Activated CD4-positive, alpha-beta memory T cell treated with anti-CD3 and anti-CD28 coated beads for 36 hours (primary cell): ENCODE measurements at regions of chrX and their contacts with region 1.

Region 1: GRCh38 chrX:17736856-17737706 is at the start of gene SCML1:
- DNase-seq: peak; percentile 94
- H3K4me3 Mint-ChIP-seq: peak within 1 kb of the TSS; percentile 75
- H3K27ac Mint-ChIP-seq: peak within 1 kb of the TSS; percentile 73
- H3K4me1 Mint-ChIP-seq: peaks cover 19% of the 10 kb centered on the region
- H3K27me3 Mint-ChIP-seq: peaks cover 4% of the 10 kb centered on the region
- total RNA-seq, gene SCML1: 3.8 TPM

Region 2: DNA sequence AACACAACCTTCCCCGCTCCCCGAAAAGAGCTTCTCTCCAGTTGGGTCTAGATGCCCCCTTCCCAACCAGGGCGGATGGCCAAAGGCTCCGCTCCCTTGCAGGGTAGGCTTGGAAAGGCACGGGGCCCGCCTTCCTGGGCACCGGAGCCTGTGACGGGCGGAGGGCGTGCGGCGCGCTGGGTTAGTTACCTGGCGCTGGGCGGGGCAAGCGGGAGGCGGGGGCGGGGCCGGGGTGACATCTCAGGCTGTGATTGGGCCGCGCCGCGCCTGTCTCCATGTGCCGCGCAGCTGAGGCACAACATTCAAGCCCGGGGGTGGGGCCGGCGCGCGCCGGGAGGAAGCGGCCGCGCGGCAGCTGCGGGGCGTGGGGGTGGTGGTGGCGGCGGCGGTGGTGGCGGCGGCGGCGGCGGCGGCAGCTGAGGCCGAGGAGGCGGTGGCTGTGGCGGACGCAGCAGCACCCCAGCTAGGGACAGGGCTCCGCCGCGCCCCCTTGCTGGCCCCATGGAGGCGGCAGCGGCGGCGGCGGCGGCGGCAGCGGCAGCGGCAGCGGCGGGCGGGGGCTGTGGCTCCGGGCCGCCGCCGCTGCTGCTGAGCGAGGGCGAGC is 790.6 kb before region 1 on chrX and contains the start of gene REPS2:
- CTCF ChIA-PET with region 1: no interaction called
- POLR2A ChIA-PET with region 1: no interaction called
- intact Hi-C with region 1: loop called (anchors 5 kb)
- DNase-seq: peak; percentile 85
- H3K4me3 Mint-ChIP-seq: peak within 1 kb of the TSS; percentile 69
- H3K27ac Mint-ChIP-seq: no peak within 1 kb of the TSS
- H3K4me1 Mint-ChIP-seq: no peaks in the 10 kb centered on the region
- H3K27me3 Mint-ChIP-seq: no peaks in the 10 kb centered on the region
- total RNA-seq, gene REPS2: not detected

Region 3: GRCh38 chrX:17374619-17375366 is 362.3 kb before region 1 on chrX and contains the start of gene NHS:
- CTCF ChIA-PET with region 1: no interaction called
- POLR2A ChIA-PET with region 1: no interaction called
- intact Hi-C with region 1: loop called (anchors 2 kb)
- DNase-seq: peak; percentile 31
- H3K4me3 Mint-ChIP-seq: no peak within 1 kb of the TSS
- H3K27ac Mint-ChIP-seq: no peak within 1 kb of the TSS
- H3K4me1 Mint-ChIP-seq: peaks cover 9% of the 10 kb centered on the region
- H3K27me3 Mint-ChIP-seq: peaks cover 22% of the 10 kb centered on the region
- total RNA-seq, gene NHS: 4.8 to 5.0 TPM

Region 4: DNA sequence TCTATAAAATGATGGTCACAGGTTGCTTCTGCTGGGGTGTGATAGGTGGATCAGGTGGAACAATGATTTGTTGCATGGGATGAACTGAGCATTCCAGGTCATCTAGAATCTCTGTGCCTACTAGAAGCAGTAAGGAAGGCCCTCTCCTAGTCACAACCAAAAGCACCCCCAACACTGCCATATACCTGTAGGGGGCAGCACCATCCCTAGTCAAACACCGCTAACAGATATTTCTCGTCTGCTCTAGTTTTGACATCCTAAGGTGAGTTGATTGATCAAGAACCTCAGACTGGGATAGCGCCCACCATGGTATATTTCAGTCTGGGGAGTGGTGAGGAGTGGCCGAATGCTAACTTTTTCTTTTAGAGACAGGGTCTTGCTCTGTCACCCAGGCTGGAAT is 201.9 kb before region 1 on chrX:
- CTCF ChIA-PET with region 1: no interaction called
- POLR2A ChIA-PET with region 1: no interaction called
- intact Hi-C with region 1: loop called (anchors 2 kb)
- DNase-seq: peak; percentile 69
- H3K4me3 Mint-ChIP-seq: no peak overlapping the region
- H3K27ac Mint-ChIP-seq: no peak overlapping the region
- H3K4me1 Mint-ChIP-seq: peaks cover 17% of the 10 kb centered on the region
- H3K27me3 Mint-ChIP-seq: no peaks in the 10 kb centered on the region

Region 5: DNA sequence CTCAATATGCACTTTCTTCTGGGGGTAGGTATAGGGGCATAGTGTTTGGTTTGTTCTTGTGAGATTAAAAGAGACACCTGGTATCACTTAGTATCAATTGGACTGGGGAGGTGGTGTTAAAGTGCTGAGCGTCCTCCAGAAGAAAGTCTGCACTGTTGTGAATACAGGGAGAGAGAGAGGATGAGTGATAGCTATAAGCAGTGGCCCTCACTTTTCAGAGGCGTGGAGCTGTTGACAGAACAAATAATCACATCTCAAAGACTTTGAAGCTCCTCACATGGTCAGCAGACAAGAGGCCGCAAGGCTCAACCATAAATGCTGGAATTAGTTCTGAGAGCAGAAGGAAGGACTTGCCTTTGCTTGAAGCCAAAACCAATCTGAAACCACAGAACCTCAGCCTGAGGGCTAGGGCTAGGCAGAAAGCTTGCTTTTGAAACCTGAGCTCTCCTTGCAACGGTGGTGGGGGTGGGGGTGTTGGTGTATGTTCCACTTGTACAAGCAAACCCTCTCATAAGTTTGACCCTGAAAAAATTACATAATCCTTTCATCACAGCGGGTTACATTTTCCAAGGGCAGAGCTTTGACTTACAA is 123.0 kb before region 1 on chrX:
- CTCF ChIA-PET with region 1: no interaction called
- POLR2A ChIA-PET with region 1: no interaction called
- intact Hi-C with region 1: no loop called
- DNase-seq: peak; percentile 9
- H3K4me3 Mint-ChIP-seq: no peak overlapping the region
- H3K27ac Mint-ChIP-seq: no peak overlapping the region
- H3K4me1 Mint-ChIP-seq: peaks cover 19% of the 10 kb centered on the region
- H3K27me3 Mint-ChIP-seq: peaks cover 5% of the 10 kb centered on the region

Region 6: DNA sequence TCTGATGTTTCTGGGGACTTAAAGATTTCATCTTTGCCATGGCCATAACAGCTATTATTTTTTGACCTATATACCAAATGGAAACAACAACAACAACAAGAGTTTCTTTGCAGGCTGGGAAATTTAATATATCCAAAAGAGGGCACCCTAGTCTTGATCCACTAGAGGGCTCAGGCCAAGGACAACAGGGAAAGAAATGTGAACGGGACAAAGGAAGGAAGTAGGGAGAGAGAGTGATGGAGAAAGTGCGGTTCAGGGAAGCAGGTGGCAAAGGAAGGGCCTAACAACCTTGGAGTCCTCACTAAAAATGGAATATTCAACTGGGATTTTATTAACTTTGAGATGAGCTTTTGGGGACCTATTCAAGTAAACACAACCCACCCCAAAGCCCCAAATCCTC is 67.6 kb before region 1 on chrX:
- CTCF ChIA-PET with region 1: no interaction called
- POLR2A ChIA-PET with region 1: no interaction called
- intact Hi-C with region 1: loop called (anchors 5 kb)
- DNase-seq: no peak
- H3K4me3 Mint-ChIP-seq: no peak overlapping the region
- H3K27ac Mint-ChIP-seq: peak overlapping the region; percentile 80
- H3K4me1 Mint-ChIP-seq: peaks cover 16% of the 10 kb centered on the region
- H3K27me3 Mint-ChIP-seq: no peaks in the 10 kb centered on the region

Region 7: DNA sequence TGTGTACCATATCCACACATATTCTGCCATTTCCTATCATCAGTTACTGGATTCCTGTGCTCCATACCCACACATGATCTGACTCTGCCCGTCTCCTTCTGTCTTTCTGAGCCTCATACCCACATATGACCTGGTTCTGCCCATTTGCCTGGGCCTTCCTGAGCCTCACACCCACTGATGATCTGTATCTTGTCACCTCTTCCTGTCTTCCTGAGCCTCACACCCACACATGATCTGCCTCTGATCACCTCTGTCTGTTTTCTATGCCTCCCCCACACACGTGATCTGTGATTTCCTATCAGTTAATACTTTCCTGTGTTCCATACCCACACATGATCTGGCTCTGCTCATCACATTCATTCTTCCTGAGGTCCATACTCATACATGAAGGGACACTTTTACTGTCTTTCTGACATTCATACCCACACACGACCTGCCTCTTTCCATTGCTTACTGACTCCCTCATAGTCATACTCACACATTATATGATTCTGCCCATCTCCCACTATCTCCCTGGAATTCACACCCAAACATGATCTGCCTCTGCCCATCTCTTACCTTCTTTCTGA is 32.7 kb after region 1 on chrX:
- CTCF ChIA-PET with region 1: no interaction called
- POLR2A ChIA-PET with region 1: no interaction called
- intact Hi-C with region 1: loop called (anchors 2 kb)
- DNase-seq: peak; percentile 25
- H3K4me3 Mint-ChIP-seq: no peak overlapping the region
- H3K27ac Mint-ChIP-seq: no peak overlapping the region
- H3K4me1 Mint-ChIP-seq: no peaks in the 10 kb centered on the region
- H3K27me3 Mint-ChIP-seq: no peaks in the 10 kb centered on the region

Region 8: DNA sequence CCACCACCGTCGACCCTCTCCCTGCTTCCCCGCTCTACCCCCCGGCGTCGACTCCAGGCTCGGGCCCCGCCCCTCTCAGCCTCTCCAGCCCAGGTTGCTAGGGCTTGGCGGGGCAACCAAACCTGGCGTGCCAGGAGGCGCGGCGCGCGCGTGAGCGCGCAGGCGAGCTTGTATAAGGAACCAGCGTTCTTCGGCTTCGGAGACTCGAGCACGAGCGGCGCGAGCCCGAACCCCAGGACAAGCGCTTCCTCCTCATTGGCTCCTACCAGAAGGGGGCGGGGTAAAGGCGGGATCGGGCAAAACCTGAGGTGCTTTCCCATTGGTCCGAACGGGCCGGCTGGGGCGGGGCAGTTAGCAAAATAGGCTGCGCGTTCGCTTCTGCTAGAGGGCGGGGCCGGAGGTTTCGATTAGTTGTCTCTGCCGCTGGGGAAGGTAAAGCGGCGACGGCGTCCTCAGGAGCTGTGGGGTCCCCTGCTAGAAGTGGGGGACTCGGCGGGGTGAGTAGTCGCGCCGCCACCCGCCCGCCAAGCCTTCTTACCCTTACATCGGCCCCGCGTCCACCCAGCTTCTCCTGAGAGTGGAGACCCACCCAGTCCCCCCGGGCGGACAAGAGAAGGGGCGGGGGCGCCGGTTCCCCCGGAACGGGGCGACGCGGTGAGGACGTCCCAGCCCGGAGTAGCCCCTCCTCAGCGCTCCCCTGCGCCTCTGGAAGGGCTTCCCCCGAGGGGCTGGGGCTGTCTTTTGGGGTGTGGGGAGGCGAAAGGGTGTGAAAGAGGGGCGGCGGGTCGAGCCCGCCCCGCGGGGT is 688.3 kb after region 1 on chrX and contains the start of gene CDKL5:
- CTCF ChIA-PET with region 1: no interaction called
- POLR2A ChIA-PET with region 1: no interaction called
- intact Hi-C with region 1: loop called (anchors 1 kb)
- DNase-seq: peak; percentile 97
- H3K4me3 Mint-ChIP-seq: peak within 1 kb of the TSS; percentile 77
- H3K27ac Mint-ChIP-seq: no peak within 1 kb of the TSS
- H3K4me1 Mint-ChIP-seq: peaks cover 9% of the 10 kb centered on the region
- H3K27me3 Mint-ChIP-seq: peaks cover 3% of the 10 kb centered on the region
- total RNA-seq, gene CDKL5: 1.2 to 1.4 TPM